ENCODE measurements at regions of chr12 and their contacts with region 1.

Region 1: GRCh38 chr12:3684449-3685051 is 68.4 kb downstream of the CRACR2A start:
- DNase-seq: no peak
- ATAC-seq: no peak
- H3K4me3 ChIP-seq: no peak overlapping the region
- H3K4me3 Mint-ChIP-seq: no peak overlapping the region
- H3K27ac ChIP-seq: no peak overlapping the region
- H3K27ac Mint-ChIP-seq: no peak overlapping the region
- H3K4me1 ChIP-seq: no peaks in the 10 kb centered on the region
- H3K4me1 Mint-ChIP-seq: no peaks in the 10 kb centered on the region
- H3K27me3 ChIP-seq: no peaks in the 10 kb centered on the region
- H3K27me3 Mint-ChIP-seq: no peaks in the 10 kb centered on the region
- CTCF ChIP-seq: no peak

Region 2: GRCh38 chr12:3735432-3735831 is 50.9 kb after region 1 on chr12:
- CTCF ChIA-PET with region 1: no interaction called
- POLR2A ChIA-PET with region 1: no interaction called
- intact Hi-C with region 1: loop called (anchors 5 kb)
- DNase-seq: no peak
- ATAC-seq: no peak
- H3K4me3 ChIP-seq: no peak overlapping the region
- H3K4me3 Mint-ChIP-seq: no peak overlapping the region
- H3K27ac ChIP-seq: no peak overlapping the region
- H3K27ac Mint-ChIP-seq: no peak overlapping the region
- H3K4me1 ChIP-seq: no peaks in the 10 kb centered on the region
- H3K4me1 Mint-ChIP-seq: no peaks in the 10 kb centered on the region
- H3K27me3 ChIP-seq: no peaks in the 10 kb centered on the region
- H3K27me3 Mint-ChIP-seq: no peaks in the 10 kb centered on the region
- CTCF ChIP-seq: no peak